ENCODE measurements at regions of chr4 and their contacts with region 1.

Region 1: DNA sequence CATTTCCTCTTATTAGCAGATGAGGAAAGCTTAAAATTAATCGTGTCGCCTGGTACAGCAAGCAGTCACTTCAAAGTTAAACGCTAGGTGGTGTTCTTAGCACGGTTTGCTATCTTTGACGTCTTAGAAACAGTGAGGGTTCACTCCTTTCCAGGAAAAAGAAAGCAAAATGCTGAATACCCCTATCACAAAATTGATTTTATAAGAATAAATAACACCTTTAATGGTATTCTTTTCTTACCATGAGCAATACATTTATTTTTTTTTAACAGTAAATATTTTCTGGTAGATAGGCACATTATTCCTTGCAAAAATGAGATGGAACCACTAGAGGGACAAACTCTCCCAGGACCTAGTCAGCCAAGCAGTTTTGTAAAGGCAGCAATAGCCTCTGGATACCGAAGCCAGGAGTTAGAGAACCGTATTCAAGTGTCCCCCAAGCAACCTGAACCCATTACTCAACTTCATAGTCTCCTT is 153.9 kb downstream of the KDR start:
- DNase-seq: peak; percentile 32
- H3K4me3 ChIP-seq: no peak overlapping the region
- H3K27ac ChIP-seq: no peak overlapping the region
- H3K4me1 ChIP-seq: no peaks in the 10 kb centered on the region
- H3K27me3 ChIP-seq: no peaks in the 10 kb centered on the region
- CTCF ChIP-seq: peak; percentile 66 to 75

Region 2: DNA sequence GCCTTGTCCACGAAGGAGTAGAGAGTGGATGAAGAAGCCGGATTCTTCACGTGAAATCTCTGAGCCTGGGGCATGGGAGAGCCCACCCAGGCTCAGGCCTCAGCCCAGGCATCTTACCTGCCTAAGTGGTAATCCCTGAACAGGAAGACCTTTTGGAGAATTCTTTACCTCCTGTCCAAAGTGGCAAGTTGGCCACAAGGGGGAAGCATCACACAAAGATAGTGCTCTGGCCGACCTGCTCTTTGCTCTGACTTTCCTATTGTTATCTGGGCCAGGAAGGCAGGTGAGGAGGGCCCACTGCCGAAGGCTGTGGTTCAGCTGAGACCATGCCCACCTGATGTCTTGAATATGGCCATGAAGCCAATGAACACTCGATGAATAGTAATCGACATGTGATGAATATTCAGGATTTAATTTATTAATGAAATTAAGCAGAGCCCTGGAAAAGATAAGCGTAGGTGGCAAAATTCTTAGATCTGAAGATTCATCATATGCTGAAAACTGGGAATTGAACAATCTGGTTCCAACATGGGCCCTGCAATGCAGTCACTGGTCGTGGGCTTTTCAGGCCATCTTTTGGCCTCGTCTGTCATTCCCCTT is 648.6 kb before region 1 on chr4:
- CTCF ChIA-PET with region 1: no interaction called
- dilution Hi-C with region 1: no loop called
- in situ Hi-C with region 1: loop called (anchors 10 to 25 kb)
- intact Hi-C with region 1: no loop called
- DNase-seq: peak; percentile 57
- H3K4me3 ChIP-seq: no peak overlapping the region
- H3K27ac ChIP-seq: no peak overlapping the region
- H3K4me1 ChIP-seq: no peaks in the 10 kb centered on the region
- H3K27me3 ChIP-seq: no peaks in the 10 kb centered on the region
- CTCF ChIP-seq: peak; percentile 57 to 83

Region 3: GRCh38 chr4:55312489-55313101 is 341.1 kb after region 1 on chr4:
- CTCF ChIA-PET with region 1: no interaction called
- dilution Hi-C with region 1: loop called (anchors 25 kb)
- in situ Hi-C with region 1: no loop called
- intact Hi-C with region 1: no loop called
- DNase-seq: peak; percentile 25
- H3K4me3 ChIP-seq: no peak overlapping the region
- H3K27ac ChIP-seq: no peak overlapping the region
- H3K4me1 ChIP-seq: no peaks in the 10 kb centered on the region
- H3K27me3 ChIP-seq: no peaks in the 10 kb centered on the region
- CTCF ChIP-seq: peak; percentile 71 to 88

Region 4: GRCh38 chr4:55358668-55359067 is 387.2 kb after region 1 on chr4:
- CTCF ChIA-PET with region 1: interaction called, 13 read pairs
- dilution Hi-C with region 1: no loop called
- in situ Hi-C with region 1: no loop called
- intact Hi-C with region 1: no loop called
- DNase-seq: peak; percentile 83
- H3K4me3 ChIP-seq: no peak overlapping the region
- H3K27ac ChIP-seq: no peak overlapping the region
- H3K4me1 ChIP-seq: peaks cover 25% of the 10 kb centered on the region
- H3K27me3 ChIP-seq: no peaks in the 10 kb centered on the region
- CTCF ChIP-seq: no peak

Region 5: GRCh38 chr4:55554453-55555030 is 583.0 kb after region 1 on chr4:
- CTCF ChIA-PET with region 1: no interaction called
- dilution Hi-C with region 1: no loop called
- in situ Hi-C with region 1: loop called in 1 of 2 experiments (anchors 25 kb)
- intact Hi-C with region 1: loop called (anchors 5 kb)
- DNase-seq: no peak
- H3K4me3 ChIP-seq: no peak overlapping the region
- H3K27ac ChIP-seq: no peak overlapping the region
- H3K4me1 ChIP-seq: peaks cover 11% of the 10 kb centered on the region
- H3K27me3 ChIP-seq: no peaks in the 10 kb centered on the region
- CTCF ChIP-seq: peak; percentile 12 to 56

Region 6: GRCh38 chr4:56301181-56302076 is 1329.9 kb after region 1 on chr4:
- CTCF ChIA-PET with region 1: no interaction called
- dilution Hi-C with region 1: no loop called
- in situ Hi-C with region 1: no loop called
- intact Hi-C with region 1: loop called (anchors 10 kb)
- DNase-seq: peak; percentile 65
- H3K4me3 ChIP-seq: no peak overlapping the region
- H3K27ac ChIP-seq: no peak overlapping the region
- H3K4me1 ChIP-seq: no peaks in the 10 kb centered on the region
- H3K27me3 ChIP-seq: no peaks in the 10 kb centered on the region
- CTCF ChIP-seq: peak; percentile 95 to 99